ENCODE measurements at regions of chr10 and their contacts with region 1.

Region 1: GRCh38 chr10:67697724-67698131 is 1.7 kb upstream of the CTNNA3 start:
- DNase-seq: peak in 3 of 5 donors; percentile 14 to 70 (median 56)
- H3K4me3 ChIP-seq: peak overlapping the region in 1 of 3 donors; percentile 9
- H3K27ac ChIP-seq: no peak overlapping the region
- H3K4me1 ChIP-seq: no peaks in the 10 kb centered on the region
- H3K27me3 ChIP-seq: no peaks in the 10 kb centered on the region
- CTCF ChIP-seq: peak; percentile 56

Region 2: GRCh38 chr10:67476201-67476600 is 221.5 kb before region 1 on chr10:
- intact Hi-C with region 1: no loop called
- DNase-seq: no peak
- H3K4me3 ChIP-seq: no peak overlapping the region
- H3K27ac ChIP-seq: no peak overlapping the region
- H3K4me1 ChIP-seq: no peaks in the 10 kb centered on the region
- H3K27me3 ChIP-seq: no peaks in the 10 kb centered on the region
- CTCF ChIP-seq: no peak

Region 3: DNA sequence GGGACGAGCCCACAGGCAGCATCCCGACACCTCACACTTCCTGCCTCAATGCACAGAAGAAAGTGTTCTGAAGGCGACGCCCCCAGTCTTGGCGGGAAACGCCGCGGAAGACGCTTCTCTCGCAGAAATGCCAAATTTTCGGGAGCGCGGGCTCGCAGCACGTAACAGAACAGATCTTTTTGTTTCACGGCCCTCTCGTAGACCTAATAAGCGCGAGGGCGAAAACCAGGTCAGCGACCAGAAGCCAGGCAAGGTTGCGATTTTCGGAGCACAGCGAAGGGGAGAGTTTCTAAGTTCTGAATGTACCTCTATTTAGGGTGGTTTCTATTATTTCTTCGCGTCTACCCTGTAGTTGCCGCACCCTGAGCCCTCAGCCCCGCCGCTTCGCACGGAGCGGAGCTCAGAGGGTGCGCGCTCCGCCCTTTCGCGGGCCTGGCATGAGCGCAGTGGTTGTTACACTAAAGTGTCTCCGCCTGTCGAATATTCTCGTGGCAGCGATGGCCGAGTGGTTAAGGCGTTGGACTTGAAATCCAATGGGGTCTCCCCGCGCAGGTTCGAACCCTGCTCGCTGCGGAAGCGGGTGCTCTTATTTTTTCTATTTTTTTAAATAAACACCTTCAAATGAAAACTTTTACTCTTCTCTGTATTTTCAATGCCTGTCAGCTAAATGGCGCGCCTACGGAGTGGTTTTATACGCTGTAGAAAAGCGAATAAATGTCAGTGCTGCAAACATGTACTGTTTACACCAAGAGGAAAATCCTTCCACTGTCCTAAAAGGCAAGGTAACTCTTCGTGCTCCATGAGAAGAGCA is 66.5 kb after region 1 on chr10:
- intact Hi-C with region 1: no loop called
- DNase-seq: peak; percentile 97 to 98 (median 98)
- H3K4me3 ChIP-seq: peak overlapping the region; percentile 94 to 100 (median 95)
- H3K27ac ChIP-seq: peak overlapping the region; percentile 92 to 95
- H3K4me1 ChIP-seq: peaks cover 0 to 2% (median 0%) of the 10 kb centered on the region in 3 donors
- H3K27me3 ChIP-seq: no peaks in the 10 kb centered on the region
- CTCF ChIP-seq: no peak

Region 4: DNA sequence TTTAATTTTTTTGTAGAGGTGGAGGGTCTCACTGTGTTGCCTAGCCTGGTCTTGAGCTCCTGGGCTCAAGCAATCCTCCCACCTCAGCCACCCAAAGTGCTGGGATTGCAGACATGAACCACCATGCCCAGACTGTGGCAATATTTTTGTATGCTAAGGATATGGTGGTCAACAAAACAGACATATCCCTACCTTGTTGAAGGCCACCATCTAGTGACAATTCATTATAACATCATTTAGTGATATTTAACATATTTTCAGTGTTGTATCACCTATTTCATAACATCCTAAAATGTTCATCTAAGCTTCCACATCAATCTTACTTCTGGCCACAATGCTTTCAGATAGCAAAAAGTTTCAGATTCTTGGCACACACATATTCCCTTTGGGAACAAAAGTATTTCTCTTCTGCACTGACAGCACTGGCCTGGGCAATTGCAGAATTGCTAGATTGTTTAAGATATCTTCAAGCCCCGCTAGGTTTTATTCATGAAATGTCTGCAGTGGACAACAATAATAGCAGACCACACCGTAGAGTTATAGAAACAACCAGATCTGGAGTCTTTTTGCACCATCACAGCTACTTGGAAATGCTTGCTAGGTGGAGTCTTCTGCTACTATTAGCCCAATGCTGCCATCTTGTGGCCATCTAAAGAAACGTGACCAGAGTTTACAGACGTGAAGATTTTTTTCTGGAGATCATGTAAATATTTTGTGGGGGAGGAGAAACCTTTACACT is 81.9 kb after region 1 on chr10:
- intact Hi-C with region 1: loop called (anchors 10 kb)
- DNase-seq: peak in 4 of 5 donors; percentile 66 to 93 (median 78)
- H3K4me3 ChIP-seq: no peak overlapping the region
- H3K27ac ChIP-seq: no peak overlapping the region
- H3K4me1 ChIP-seq: no peaks in the 10 kb centered on the region
- H3K27me3 ChIP-seq: no peaks in the 10 kb centered on the region
- CTCF ChIP-seq: peak; percentile 86

Measured in kidney (tissue), 22 donors.